ENCODE measurements at regions of chr13 and their contacts with region 1.

Region 1: DNA sequence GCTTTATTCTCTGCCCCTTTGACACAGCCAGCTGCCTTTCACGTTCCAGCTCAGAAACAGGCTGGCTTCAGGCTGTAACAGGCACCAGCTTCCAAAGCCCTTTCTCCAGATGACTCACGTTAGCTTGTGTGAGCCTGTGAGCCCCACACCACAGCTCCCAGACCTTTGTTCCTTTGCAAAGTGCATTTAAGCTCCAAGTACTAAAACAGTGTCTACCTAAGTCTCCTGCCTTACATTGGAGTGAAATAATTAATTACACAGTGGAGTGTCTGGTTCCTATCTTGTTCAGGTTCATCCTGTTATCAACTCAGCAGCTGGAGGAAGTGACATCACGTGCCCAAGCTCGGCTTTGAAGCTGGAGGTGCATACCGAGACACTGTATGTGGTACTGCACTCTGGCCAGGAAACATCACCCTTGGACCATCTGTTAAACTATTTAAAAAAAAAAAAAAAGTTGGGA is 475.8 kb downstream of the FOXO1 start:
- DNase-seq: peak; percentile 86
- H3K4me3 Mint-ChIP-seq: peak overlapping the region; percentile 25
- H3K27ac Mint-ChIP-seq: peak overlapping the region; percentile 95
- H3K4me1 Mint-ChIP-seq: peaks cover 70% of the 10 kb centered on the region
- H3K27me3 Mint-ChIP-seq: no peaks in the 10 kb centered on the region

Region 2: GRCh38 chr13:40204246-40204645 is 13.6 kb after region 1 on chr13:
- CTCF ChIA-PET with region 1: interaction called, 12 read pairs
- POLR2A ChIA-PET with region 1: no interaction called
- DNase-seq: no peak
- H3K4me3 Mint-ChIP-seq: no peak overlapping the region
- H3K27ac Mint-ChIP-seq: no peak overlapping the region
- H3K4me1 Mint-ChIP-seq: peaks cover 46% of the 10 kb centered on the region
- H3K27me3 Mint-ChIP-seq: no peaks in the 10 kb centered on the region

Region 3: DNA sequence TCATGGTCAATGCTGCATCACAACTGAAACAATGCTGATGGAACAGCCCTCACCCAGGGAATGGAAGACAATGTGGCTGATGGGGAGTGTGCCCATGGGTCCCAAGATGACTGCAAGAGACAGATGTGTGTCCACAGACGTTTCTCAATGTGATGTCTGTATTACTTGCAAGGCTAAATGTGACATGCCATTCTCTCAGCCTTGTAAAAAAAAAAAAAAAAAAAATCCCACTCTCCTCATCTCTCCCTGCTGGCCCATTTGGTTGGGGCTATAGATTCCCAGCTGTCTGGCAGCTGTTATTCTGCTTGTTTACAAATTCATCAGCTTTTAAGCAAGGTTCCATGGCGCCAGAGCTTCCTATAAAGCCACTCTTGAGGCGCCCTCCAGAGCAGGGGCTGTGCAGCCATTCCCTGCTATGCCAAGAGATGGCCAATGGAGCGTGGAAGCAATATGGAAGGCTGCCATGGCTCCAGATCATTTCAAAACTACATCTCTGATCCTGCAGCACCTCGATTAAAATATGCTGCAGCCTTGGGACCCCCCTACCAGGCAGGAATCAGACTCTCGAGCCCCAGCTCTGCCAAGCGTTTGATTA is 181.0 kb after region 1 on chr13:
- CTCF ChIA-PET with region 1: no interaction called
- POLR2A ChIA-PET with region 1: no interaction called
- DNase-seq: no peak
- H3K4me3 Mint-ChIP-seq: peak overlapping the region; percentile 2
- H3K27ac Mint-ChIP-seq: peak overlapping the region; percentile 77
- H3K4me1 Mint-ChIP-seq: peaks cover 48% of the 10 kb centered on the region
- H3K27me3 Mint-ChIP-seq: no peaks in the 10 kb centered on the region